SK-N-SH (cell line): ENCODE measurements at regions of chr1 and their contacts with region 1.

Region 1: DNA sequence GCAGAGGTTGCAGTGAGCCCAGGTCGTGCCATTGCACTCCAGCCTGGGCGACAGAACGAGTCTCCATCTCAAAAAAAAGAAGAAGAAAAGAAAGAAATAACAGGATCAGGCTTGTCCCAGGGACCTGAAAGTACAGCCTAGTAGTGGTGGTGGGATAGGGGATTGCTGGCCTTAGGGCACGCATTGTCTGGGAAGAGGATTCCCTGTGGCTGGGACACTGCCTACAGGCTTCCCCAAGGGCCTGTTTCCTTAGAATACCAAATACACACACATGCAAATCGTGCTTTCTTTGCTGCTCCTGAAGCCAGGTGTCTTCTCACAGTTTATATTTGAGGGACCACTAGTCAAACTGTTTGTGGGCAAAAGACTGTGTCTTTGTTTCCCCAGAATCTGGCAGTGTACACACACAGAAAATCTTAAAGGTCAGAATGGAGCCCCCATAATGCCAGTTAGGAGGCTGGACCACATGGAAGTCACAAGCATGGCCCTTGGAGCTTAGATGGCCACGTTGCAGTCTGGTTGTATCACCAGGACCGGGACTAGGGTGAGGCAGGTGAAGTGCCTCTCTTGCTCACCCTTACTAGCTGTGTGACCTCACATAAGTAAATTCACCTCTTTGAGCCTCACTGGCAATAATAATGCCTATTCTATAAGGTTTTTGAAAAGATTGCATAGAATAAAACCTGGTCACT is 12.7 kb upstream of the ASAP3 start:
- DNase-seq: no peak
- H3K4me3 ChIP-seq: no peak overlapping the region; a peak in 1 of 4 replicates
- H3K27ac ChIP-seq: no peak overlapping the region
- H3K4me1 ChIP-seq: no peaks in the 10 kb centered on the region
- H3K27me3 ChIP-seq: no peaks in the 10 kb centered on the region
- CTCF ChIP-seq: no peak
- EP300 ChIP-seq: no peak
- RAD21 ChIP-seq: no peak

Region 2: GRCh38 chr1:23376890-23377811 is 119.5 kb before region 1 on chr1:
- CTCF ChIA-PET with region 1: no interaction called
- POLR2A ChIA-PET with region 1: no interaction called
- DNase-seq: no peak
- H3K4me3 ChIP-seq: no peak overlapping the region
- H3K27ac ChIP-seq: peak overlapping the region; percentile 28 to 64; a peak in 2 of 4 replicates
- H3K4me1 ChIP-seq: peaks cover under 1 to 13% of the 10 kb centered on the region in 2 experiments; a peak in 3 of 4 replicates
- H3K27me3 ChIP-seq: no peaks in the 10 kb centered on the region
- CTCF ChIP-seq: no peak
- EP300 ChIP-seq: no peak
- RAD21 ChIP-seq: no peak

Region 3: GRCh38 chr1:23484253-23485001 is 12.2 kb before region 1 on chr1:
- CTCF ChIA-PET with region 1: interaction called, 47 read pairs
- POLR2A ChIA-PET with region 1: interaction called, 4 read pairs
- DNase-seq: peak; percentile 99
- H3K4me3 ChIP-seq: peak overlapping the region; percentile 73 to 79
- H3K27ac ChIP-seq: peak overlapping the region; percentile 72 to 89
- H3K4me1 ChIP-seq: peaks cover 0 to 6% of the 10 kb centered on the region in 2 experiments; a peak in 1 of 4 replicates
- H3K27me3 ChIP-seq: no peaks in the 10 kb centered on the region
- CTCF ChIP-seq: no peak
- EP300 ChIP-seq: no peak
- RAD21 ChIP-seq: no peak

Region 4: GRCh38 chr1:23507507-23507906 is 10.9 kb after region 1 on chr1:
- CTCF ChIA-PET with region 1: interaction called, 45 read pairs
- POLR2A ChIA-PET with region 1: interaction called, 8 read pairs
- DNase-seq: no peak
- H3K4me3 ChIP-seq: no peak overlapping the region
- H3K27ac ChIP-seq: no peak overlapping the region
- H3K4me1 ChIP-seq: no peaks in the 10 kb centered on the region
- H3K27me3 ChIP-seq: no peaks in the 10 kb centered on the region
- CTCF ChIP-seq: no peak
- EP300 ChIP-seq: no peak
- RAD21 ChIP-seq: no peak

Region 5: GRCh38 chr1:23530747-23531561 is 34.3 kb after region 1 on chr1 and contains the start of gene E2F2:
- CTCF ChIA-PET with region 1: interaction called, 503 read pairs
- POLR2A ChIA-PET with region 1: interaction called, 18 read pairs
- DNase-seq: peak; percentile 94
- H3K4me3 ChIP-seq: peak within 1 kb of the TSS; percentile 67 to 74
- H3K27ac ChIP-seq: peak within 1 kb of the TSS in 1 of 2 experiments; percentile 98; a peak in 2 of 4 replicates
- H3K4me1 ChIP-seq: peaks cover 11 to 34% of the 10 kb centered on the region in 2 experiments; a peak in 3 of 4 replicates
- H3K27me3 ChIP-seq: no peaks in the 10 kb centered on the region
- CTCF ChIP-seq: no peak
- EP300 ChIP-seq: no peak
- RAD21 ChIP-seq: no peak
- polyA plus RNA-seq, gene E2F2: 0.43 and 0.44 TPM in 2 replicates

Region 6: GRCh38 chr1:23559136-23559984 is 62.7 kb after region 1 on chr1 and contains the start of gene ID3:
- CTCF ChIA-PET with region 1: interaction called, 12 read pairs
- POLR2A ChIA-PET with region 1: interaction called, 3 read pairs
- DNase-seq: peak; percentile 83
- H3K4me3 ChIP-seq: peak within 1 kb of the TSS; percentile 88 to 92
- H3K27ac ChIP-seq: peak within 1 kb of the TSS; percentile 98 to 100
- H3K4me1 ChIP-seq: peaks cover 60 to 77% of the 10 kb centered on the region in 2 experiments
- H3K27me3 ChIP-seq: no peaks in the 10 kb centered on the region
- CTCF ChIP-seq: no peak
- EP300 ChIP-seq: peak; percentile 14 to 58; a peak in 3 of 4 replicates
- RAD21 ChIP-seq: 0 out of 2 replicates have a peak, but pooled peaks have one; percentile 0
- polyA plus RNA-seq, gene ID3: 394 and 504 TPM in 2 replicates

Region 7: GRCh38 chr1:23664837-23665795 is 168.5 kb after region 1 on chr1:
- CTCF ChIA-PET with region 1: interaction called, 21 read pairs
- POLR2A ChIA-PET with region 1: no interaction called
- DNase-seq: peak; percentile 54
- H3K4me3 ChIP-seq: no peak overlapping the region; a peak in 1 of 4 replicates
- H3K27ac ChIP-seq: no peak overlapping the region
- H3K4me1 ChIP-seq: no peaks in the 10 kb centered on the region
- H3K27me3 ChIP-seq: no peaks in the 10 kb centered on the region
- CTCF ChIP-seq: peak; percentile 66
- EP300 ChIP-seq: no peak
- RAD21 ChIP-seq: peak; percentile 68